ENCODE measurements at regions of chr7 and their contacts with region 1.

Region 1: GRCh38 chr7:116598278-116598677 is 73.4 kb downstream of the CAV1 start:
- DNase-seq: peak in 6 of 10 donors; percentile 24 to 45 (median 32)
- H3K4me3 ChIP-seq: peak overlapping the region in 4 of 59 donors; percentile 6 to 38 (median 34)
- H3K27ac ChIP-seq: peak overlapping the region in 51 of 59 donors; percentile 3 to 92 (median 70)
- H3K27me3 ChIP-seq: peaks cover 0 to 5% (median 0%) of the 10 kb centered on the region in 45 donors
- CTCF ChIP-seq: peak in 46 of 56 donors; percentile 11 to 69 (median 44)

Region 2: DNA sequence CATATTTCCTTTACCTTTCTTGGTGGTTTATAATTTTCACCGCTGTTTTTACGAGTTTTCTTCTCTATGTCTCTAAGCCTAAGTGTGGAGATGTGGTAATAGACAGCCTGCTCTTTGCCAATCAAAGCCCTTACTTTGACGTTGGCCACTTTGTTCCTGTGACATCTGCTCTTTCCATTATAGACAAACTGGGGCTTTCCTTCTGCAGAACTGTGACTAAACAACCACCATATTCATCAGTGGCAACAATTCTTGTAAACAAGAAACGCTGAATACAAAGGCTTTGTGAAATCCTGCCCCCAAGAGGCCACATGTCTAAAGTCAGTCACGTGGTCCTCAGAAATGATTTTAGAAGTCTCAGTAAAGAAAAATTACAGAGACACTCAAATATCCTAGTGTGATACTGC is 204.5 kb after region 1 on chr7:
- intact Hi-C with region 1: loop called in 1 of 2 experiments (anchors 2 kb)
- DNase-seq: peak in 3 of 10 donors; percentile 10 to 71 (median 60)
- H3K4me3 ChIP-seq: peak overlapping the region in 3 of 59 donors; percentile 21 to 23 (median 22)
- H3K27ac ChIP-seq: peak overlapping the region in 51 of 59 donors; percentile 4 to 97 (median 81)
- H3K27me3 ChIP-seq: peaks cover 0 to 2% (median 0%) of the 10 kb centered on the region in 45 donors
- CTCF ChIP-seq: peak in 55 of 56 donors; percentile 25 to 76 (median 54)

Measured in dorsolateral prefrontal cortex (tissue), 120 donors.